Dorsolateral prefrontal cortex (tissue), 120 donors: ENCODE measurements at regions of chr6 and their contacts with region 1.

Region 1: GRCh38 chr6:6749702-6750491 is 161.4 kb downstream of the LY86 start:
- DNase-seq: peak in 6 of 10 donors; percentile 49 to 76 (median 57)
- H3K4me3 ChIP-seq: no peak overlapping the region
- H3K27ac ChIP-seq: peak overlapping the region in 25 of 59 donors; percentile 8 to 74 (median 43)
- H3K27me3 ChIP-seq: no peaks in the 10 kb centered on the region
- CTCF ChIP-seq: no peak

Region 2: DNA sequence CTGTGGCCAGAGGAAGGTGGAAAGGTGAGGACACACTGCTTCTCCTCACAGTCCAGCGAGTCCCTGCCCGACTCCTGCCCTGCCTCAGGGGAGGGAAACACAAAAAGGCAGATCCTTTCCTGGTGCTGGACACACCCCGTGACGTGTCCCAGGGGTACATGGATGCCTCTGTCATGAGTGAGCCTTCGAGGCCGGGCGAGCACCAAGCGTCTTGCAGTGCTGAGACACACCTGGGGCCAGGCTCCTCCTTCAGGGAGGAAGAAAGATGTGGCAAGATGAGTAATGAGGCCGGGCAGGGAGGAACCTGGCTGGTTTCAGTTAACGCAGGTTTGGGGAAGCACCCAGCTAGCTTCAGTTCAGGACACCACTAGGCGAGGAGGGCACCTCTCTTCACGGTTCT is 53.7 kb after region 1 on chr6:
- intact Hi-C with region 1: no loop called
- DNase-seq: no peak
- H3K4me3 ChIP-seq: no peak overlapping the region
- H3K27ac ChIP-seq: no peak overlapping the region
- H3K27me3 ChIP-seq: peaks cover 0 to 5% (median 0%) of the 10 kb centered on the region in 45 donors
- CTCF ChIP-seq: no peak

Region 3: DNA sequence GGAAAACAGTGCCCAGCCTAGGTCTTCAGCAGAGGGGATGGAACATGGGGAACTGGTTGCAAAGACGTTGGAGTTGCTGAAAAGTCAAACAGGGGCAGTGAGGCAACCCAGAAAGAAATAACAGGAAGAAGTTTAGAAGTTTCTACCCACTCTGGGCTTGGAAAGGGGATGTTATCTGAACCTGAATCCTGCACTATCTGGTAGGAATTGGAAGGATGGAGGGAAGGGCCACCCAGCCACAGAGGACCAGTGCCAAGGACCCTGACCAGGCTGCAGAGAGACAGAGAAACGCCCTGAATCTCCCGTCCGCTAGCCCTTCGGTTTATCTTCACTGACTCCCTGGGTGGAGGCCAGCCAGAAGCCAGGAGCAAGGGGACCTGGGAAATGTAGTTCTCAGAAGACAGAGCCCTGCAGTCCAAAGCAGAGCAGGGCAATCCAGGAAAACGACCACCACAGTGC is 140.5 kb after region 1 on chr6:
- intact Hi-C with region 1: no loop called
- DNase-seq: no peak
- H3K4me3 ChIP-seq: no peak overlapping the region
- H3K27ac ChIP-seq: peak overlapping the region in 2 of 59 donors; percentile 4 to 31
- H3K27me3 ChIP-seq: no peaks in the 10 kb centered on the region
- CTCF ChIP-seq: no peak

Region 4: DNA sequence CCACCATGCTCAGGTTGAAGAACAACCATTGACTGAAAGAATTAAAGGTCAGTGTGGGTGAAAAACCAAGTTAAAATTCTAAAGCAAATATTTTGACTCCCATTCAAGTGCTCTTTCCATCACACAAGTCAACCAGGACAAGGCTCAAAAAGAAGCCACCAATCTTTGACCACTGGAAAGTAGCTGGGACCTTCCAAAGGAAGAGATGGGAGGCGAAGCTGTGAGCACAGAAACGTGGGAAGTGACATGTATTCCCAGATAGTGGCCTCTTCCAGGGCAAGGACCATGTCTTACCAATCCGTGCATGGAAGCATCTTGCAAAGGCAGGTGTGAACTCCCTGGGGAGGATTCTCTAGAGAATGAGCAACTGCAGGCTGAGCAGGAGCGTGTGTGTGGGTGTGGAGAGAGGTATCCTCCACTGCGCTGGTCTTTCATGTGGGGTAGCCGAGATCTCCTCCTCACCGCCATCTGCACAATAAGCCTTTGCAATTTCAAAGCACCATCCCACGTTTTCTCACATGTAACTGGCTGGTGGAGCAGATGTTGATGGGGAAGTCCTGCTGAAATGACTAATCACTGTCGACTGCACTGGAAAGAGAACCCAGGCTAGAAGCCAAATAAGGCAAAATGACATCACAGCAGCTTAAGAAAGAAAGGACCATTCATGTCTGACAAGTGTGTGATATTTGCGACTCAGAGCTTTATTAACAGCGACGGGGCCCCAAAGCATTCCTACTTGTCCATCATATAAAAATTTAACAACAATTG is 168.5 kb after region 1 on chr6:
- intact Hi-C with region 1: loop called in 1 of 2 experiments (anchors 10 kb)
- DNase-seq: peak in 9 of 10 donors; percentile 23 to 80 (median 58)
- H3K4me3 ChIP-seq: no peak overlapping the region
- H3K27ac ChIP-seq: no peak overlapping the region
- H3K27me3 ChIP-seq: peaks cover 0 to 4% (median 0%) of the 10 kb centered on the region in 45 donors
- CTCF ChIP-seq: no peak

Region 5: DNA sequence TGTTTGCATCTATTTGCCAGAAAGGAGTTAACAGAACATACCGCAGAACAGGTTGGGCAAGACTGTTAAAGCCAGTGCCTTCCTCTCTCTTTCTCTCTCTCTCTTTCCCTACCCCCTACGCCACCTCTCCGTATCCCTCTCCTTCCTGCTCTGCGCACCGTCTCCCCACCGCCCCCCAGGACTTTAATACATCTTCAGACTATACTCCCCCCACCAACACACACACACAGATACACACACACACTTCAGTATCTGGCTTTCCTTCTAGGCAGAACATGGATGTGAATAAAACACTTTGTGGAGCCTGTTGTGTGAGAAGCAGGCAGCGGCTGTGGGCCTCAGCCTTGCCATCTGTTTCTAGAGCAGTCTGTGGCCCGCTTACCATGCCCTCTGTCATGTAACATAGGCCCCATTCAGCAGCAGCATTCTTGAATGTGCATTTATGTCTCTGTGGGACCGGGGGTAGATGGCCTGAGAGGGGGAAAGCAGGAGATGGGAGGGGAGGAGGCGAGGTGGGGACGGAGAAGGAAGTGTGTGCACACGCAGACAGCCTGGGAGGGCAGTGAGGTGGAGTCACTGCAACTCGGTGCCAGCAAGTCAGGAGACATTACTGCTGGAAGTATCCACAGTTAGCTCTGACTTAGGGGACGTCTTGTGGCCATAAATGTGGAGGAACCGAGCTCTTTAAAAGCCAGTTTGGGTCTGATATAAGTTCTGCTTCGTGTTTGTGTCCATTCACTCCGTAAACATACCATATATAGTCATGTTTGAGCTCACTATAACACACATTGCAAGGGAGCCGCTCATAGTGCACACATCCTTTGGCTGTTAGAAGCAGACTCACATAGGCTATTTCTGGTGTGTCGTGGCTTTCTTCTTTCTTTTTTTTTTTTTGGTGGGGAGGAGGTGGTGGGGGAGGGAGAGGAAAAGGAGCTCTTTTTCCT is 396.3 kb after region 1 on chr6:
- intact Hi-C with region 1: loop called in 1 of 2 experiments (anchors 5 kb)
- DNase-seq: no peak
- H3K4me3 ChIP-seq: no peak overlapping the region
- H3K27ac ChIP-seq: peak overlapping the region in 10 of 59 donors; percentile 5 to 55 (median 26)
- H3K27me3 ChIP-seq: peaks cover 0 to 2% (median 0%) of the 10 kb centered on the region in 45 donors
- CTCF ChIP-seq: no peak

Region 6: GRCh38 chr6:7254980-7255835 is 505.3 kb after region 1 on chr6:
- intact Hi-C with region 1: no loop called
- DNase-seq: peak in 2 of 10 donors; percentile 25 to 39
- H3K4me3 ChIP-seq: no peak overlapping the region
- H3K27ac ChIP-seq: peak overlapping the region in 13 of 59 donors; percentile 1 to 59 (median 35)
- H3K27me3 ChIP-seq: no peaks in the 10 kb centered on the region
- CTCF ChIP-seq: no peak